Endothelial cell of umbilical vein (primary cell): ENCODE measurements at regions of chr12 and their contacts with region 1.

Region 1: GRCh38 chr12:54701940-54702592 is 53.9 kb upstream of the DCD start:
- DNase-seq: peak; percentile 28
- H3K4me3 ChIP-seq: no peak overlapping the region
- H3K27ac ChIP-seq: no peak overlapping the region
- H3K4me1 ChIP-seq: no peaks in the 10 kb centered on the region
- H3K27me3 ChIP-seq: peaks cover 3 to 7% of the 10 kb centered on the region in 2 experiments
- CTCF ChIP-seq: peak; percentile 41 to 46
- POLR2A ChIP-seq: no peak

Region 2: DNA sequence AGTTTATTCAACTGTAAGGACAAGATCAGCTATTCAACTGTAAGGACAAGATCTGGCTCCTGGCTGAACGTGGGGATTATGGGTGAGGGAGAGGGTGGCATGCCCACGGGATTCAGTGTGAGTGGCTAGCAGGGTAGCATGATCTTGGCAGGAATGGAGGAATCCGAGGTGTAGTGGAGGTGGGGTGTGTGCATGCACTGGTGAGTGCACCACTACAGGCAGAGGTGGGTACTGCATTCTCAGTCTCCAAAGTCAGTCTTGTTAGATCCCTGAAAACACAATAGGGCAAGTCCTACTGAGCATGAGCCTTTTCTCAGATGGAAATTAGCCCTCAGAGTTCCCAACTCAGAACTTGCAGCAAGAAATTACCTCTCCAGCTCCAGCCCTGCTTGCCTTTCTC is 21.7 kb before region 1 on chr12:
- CTCF ChIA-PET with region 1: interaction called, 10 read pairs
- POLR2A ChIA-PET with region 1: no interaction called
- dilution Hi-C with region 1: no loop called
- intact Hi-C with region 1: no loop called
- DNase-seq: no peak
- H3K4me3 ChIP-seq: no peak overlapping the region
- H3K27ac ChIP-seq: no peak overlapping the region
- H3K4me1 ChIP-seq: no peaks in the 10 kb centered on the region
- H3K27me3 ChIP-seq: no peaks in the 10 kb centered on the region
- CTCF ChIP-seq: peak; percentile 40
- POLR2A ChIP-seq: no peak

Region 3: GRCh38 chr12:54723379-54724256 is 21.6 kb after region 1 on chr12:
- CTCF ChIA-PET with region 1: interaction called, 13 read pairs
- POLR2A ChIA-PET with region 1: no interaction called
- dilution Hi-C with region 1: no loop called
- intact Hi-C with region 1: no loop called
- DNase-seq: peak; percentile 24
- H3K4me3 ChIP-seq: no peak overlapping the region
- H3K27ac ChIP-seq: no peak overlapping the region
- H3K4me1 ChIP-seq: no peaks in the 10 kb centered on the region
- H3K27me3 ChIP-seq: peaks cover 1 to 2% of the 10 kb centered on the region in 2 experiments
- CTCF ChIP-seq: peak; percentile 44 to 62
- POLR2A ChIP-seq: no peak

Region 4: DNA sequence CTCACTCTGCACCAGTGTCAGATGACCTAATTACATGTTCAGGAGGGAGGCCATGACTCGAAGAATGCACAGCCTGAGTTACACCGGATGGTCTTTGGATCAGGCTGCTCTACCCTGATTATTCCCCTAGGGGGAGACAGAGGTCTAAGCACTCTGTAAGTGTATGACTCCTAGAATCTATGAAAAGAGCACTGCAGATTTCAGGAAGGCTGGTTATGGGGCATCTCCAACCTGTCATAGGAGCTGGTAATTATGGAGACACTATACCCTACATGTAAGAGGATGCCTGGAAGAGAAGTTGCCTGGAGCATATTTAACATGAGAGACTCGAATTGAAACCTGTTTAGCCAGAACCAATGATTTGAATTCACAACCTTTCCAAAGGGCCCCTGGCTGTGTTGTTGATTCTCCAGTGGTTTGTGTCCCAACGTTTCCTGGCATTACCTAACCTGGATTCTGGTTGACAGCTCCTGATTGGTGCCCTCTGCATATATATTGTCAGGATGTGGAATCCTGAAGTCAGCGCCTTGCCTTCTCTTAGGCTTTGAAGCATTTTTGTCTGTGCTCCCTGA is 152.0 kb after region 1 on chr12 and contains the start of gene MUCL1:
- CTCF ChIA-PET with region 1: no interaction called
- POLR2A ChIA-PET with region 1: no interaction called
- dilution Hi-C with region 1: no loop called
- intact Hi-C with region 1: loop called (anchors 1 kb)
- DNase-seq: peak; percentile 69
- H3K4me3 ChIP-seq: no peak within 1 kb of the TSS
- H3K27ac ChIP-seq: no peak within 1 kb of the TSS
- H3K4me1 ChIP-seq: no peaks in the 10 kb centered on the region
- H3K27me3 ChIP-seq: peaks cover 3 to 11% of the 10 kb centered on the region in 2 experiments
- CTCF ChIP-seq: peak; percentile 73 to 81
- POLR2A ChIP-seq: no peak
- total RNA-seq, gene MUCL1: not detected in 2 replicates